ENCODE measurements at regions of chr18 and their contacts with region 1.

Region 1: DNA sequence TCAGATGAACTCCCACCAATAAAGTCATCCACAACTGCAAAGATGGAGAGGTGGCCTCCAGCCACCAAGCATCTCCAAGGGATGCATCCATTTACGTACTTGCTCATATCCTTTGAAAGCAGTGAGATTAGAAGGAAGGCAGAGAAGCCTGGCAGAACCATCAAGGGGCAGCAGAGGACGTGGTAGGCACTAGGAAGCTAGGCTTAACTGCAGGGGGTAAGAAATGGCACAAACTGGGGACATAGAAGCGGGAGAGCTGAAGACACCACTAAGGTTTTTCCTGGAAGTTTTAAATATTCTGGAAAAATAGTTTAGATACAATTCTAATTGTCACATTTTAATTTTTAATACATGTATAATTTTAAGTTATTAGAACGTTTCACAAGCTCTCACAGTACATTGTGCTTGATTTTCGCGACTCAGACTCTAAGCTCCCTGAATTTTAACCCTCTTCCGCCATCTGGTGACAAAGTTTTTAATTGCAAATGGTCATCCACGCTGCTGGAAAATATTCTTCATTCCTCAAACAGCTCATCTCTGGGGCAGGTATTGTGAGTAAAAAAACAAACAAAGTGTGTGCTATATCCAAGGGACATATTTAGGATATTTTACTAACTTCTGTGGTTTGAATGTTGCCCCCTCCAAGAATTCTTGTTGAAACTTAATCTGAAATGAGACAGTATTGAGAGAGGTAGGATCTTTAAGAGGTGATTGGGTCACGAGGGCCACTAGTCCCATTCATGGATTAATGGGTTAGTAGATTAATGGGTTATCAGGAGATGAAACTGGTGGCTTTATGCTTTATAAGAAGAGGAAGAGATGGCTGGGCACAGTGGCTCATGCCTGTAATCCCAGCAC is 1.6 kb upstream of the PSTPIP2 start:
- DNase-seq: peak; percentile 68
- ATAC-seq: peak; percentile 60
- H3K4me3 Mint-ChIP-seq: no peak overlapping the region
- H3K27ac Mint-ChIP-seq: no peak overlapping the region
- H3K4me1 Mint-ChIP-seq: peaks cover 36% of the 10 kb centered on the region
- H3K27me3 Mint-ChIP-seq: no peaks in the 10 kb centered on the region

Region 2: DNA sequence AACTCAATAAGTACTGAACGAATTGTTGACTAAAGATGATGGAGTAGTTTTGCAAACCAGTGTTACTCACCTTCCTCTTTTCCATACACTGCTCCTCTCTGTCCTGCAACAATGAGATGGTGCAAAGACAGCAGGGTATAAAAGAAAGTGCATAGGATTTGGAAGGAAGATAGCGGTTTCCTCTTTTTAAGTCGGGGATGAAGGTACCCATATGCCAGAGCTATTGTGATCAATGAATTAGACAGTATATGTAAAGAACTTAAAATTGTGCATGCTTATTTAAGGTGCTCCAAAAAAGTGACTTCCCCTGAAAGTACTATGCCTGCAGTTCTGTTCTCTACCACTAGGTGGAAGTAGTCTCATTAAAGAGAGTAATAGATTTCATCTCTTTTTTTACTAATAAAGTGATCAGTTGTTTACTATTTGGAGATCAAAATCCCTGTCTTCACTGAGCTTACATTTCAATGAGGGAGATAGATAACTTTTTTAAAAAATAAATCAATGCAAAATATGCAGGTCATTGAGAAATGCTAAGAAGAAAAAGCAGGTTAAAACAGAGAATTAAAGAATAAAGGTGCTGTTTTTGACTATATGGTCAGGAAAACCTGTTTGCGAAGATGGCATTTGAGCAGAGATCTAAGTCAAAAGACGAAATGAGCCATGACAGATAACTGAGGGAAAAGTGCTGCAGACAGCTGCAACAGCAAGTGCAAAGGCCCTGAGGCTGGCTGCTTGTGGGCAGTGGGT is 798.2 kb before region 1 on chr18:
- CTCF ChIA-PET with region 1: no interaction called
- POLR2A ChIA-PET with region 1: no interaction called
- intact Hi-C with region 1: loop called in 1 of 2 experiments (anchors 10 kb)
- DNase-seq: no peak
- ATAC-seq: no peak
- H3K4me3 Mint-ChIP-seq: no peak overlapping the region
- H3K27ac Mint-ChIP-seq: no peak overlapping the region
- H3K4me1 Mint-ChIP-seq: no peaks in the 10 kb centered on the region
- H3K27me3 Mint-ChIP-seq: no peaks in the 10 kb centered on the region

Region 3: DNA sequence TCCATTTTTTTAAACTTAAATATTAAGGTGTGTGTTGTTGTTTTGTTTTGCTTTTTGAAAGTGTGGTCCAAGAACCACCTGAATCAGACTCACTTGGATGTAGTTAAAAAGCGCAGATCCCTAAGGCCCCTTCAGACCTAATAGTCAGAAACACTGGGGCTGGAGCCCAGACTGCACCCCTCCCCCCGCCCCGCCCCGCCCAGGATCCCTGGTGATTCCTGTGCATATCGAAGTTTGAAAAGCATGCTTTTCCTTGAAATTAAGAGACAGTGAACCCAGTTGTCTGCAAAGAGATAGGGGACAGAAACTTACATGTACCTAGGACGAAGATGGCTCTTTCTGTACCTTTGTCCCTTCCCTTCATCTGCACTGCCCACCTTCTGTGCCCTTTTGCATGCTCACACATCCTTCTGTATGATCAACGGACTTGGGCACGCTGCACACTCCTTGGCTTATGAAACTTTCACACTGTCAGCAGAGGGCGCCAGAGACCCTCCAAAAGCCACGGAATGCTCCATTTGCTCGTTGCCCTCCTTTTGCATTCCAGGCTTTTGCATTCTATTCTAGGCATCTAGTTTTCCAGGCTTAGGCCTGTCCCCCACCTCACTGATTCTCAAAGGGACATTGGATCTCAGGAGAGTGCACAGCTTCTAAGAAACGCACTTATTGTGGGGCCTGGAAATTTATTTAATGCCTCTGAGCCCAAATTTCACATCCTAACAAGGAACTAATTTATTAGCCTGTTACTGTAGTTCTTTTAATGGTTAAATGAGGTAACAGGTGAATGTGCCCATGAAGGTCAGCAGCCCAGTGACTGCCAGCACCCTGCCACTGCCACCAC is 382.5 kb before region 1 on chr18:
- CTCF ChIA-PET with region 1: interaction called, 7 read pairs
- POLR2A ChIA-PET with region 1: no interaction called
- intact Hi-C with region 1: loop called (anchors 1 to 2 kb)
- DNase-seq: peak; percentile 87
- ATAC-seq: peak; percentile 17
- H3K4me3 Mint-ChIP-seq: no peak overlapping the region
- H3K27ac Mint-ChIP-seq: no peak overlapping the region
- H3K4me1 Mint-ChIP-seq: peaks cover 42% of the 10 kb centered on the region
- H3K27me3 Mint-ChIP-seq: peaks cover 7% of the 10 kb centered on the region

Region 4: DNA sequence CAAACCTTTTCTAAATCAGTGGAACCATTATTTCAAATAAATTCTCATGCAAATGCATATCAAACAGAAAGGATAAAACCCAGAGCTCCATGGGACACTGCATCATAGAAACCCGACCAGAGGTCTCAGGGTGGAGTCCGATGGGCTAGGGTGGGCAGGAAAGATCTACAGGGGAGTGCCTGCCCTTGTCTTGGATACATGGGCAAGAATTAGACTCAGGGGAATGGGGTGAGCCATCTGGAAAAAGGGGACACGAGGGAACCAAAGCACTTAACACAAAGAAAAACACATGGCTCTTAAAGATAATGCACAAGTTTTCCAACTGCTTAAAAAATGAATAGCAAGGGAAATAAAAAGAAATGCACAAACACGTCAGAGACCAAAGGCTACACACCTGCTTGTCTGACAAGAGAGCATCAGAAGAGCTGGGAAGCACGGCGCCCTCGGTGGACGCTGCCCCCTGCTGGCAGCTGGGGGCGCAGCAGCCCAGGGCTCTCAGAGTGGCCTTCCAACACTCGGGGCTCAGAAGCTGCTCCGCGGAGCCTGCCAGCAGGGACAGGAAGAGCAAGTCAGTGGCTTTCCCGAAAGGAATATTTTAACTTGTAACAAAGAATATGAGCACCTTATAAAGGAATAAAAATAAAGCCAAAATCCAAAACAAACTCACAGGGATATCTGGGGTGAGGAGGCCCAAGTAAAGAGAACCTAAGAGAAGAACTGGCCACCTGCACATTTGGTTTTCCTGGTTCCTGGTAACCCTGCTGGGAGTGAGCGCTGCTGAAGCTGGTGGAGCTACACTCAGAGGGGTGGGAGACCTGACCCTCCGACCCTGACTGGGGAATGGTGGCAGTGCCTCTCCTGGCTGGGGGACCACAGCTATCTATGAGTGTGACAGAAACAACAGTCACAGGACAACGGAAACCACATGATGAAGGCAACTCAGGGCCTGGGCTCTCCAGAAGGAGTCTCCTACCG is 193.7 kb before region 1 on chr18:
- CTCF ChIA-PET with region 1: interaction called, 20 read pairs
- POLR2A ChIA-PET with region 1: no interaction called
- intact Hi-C with region 1: loop called in 1 of 2 experiments (anchors 2 kb)
- DNase-seq: peak; percentile 85
- ATAC-seq: peak; percentile 87
- H3K4me3 Mint-ChIP-seq: no peak overlapping the region
- H3K27ac Mint-ChIP-seq: no peak overlapping the region
- H3K4me1 Mint-ChIP-seq: peaks cover 10% of the 10 kb centered on the region
- H3K27me3 Mint-ChIP-seq: no peaks in the 10 kb centered on the region

Region 5: DNA sequence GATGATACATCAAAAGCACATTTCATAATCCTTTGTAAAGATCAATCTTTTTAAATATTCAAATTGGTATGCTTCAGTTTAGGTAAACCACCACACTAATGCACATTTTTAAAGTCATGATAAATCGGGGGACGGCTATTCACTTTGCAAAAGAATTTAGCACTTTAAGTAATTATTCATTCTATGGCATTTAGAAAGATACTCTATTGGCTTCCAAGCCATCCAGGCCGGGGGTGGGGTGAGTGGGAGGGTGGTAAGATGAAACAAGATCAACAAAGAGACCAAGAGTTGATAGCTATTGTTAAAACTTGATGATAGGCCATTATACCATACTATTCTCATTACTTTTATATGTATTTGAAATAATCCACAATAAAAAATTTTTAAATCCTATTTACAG is 147.6 kb before region 1 on chr18:
- CTCF ChIA-PET with region 1: interaction called, 11 read pairs
- POLR2A ChIA-PET with region 1: no interaction called
- intact Hi-C with region 1: loop called in 1 of 2 experiments (anchors 10 kb)
- DNase-seq: no peak
- ATAC-seq: no peak
- H3K4me3 Mint-ChIP-seq: no peak overlapping the region
- H3K27ac Mint-ChIP-seq: no peak overlapping the region
- H3K4me1 Mint-ChIP-seq: peaks cover 4% of the 10 kb centered on the region
- H3K27me3 Mint-ChIP-seq: no peaks in the 10 kb centered on the region

Region 6: DNA sequence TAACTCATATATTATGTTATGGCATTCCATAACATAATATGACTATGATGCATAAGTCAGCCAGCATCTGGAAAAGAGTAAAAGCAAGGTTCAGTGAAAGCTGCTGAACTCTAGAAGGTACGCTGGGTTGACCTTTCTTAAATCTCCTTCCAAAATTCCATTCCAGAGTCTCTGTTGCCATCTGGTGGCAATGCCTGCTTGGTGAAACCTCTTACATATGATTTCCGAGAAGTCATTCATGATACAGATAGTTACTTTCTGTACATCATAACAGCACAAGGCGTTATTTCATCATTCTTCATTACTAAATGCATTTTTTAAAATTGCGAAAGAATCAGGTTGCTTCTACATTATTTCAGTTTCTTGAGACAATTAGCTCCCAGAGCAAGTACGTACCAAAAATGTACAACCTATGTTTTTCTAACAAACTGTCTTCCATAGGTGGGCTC is 99.6 kb before region 1 on chr18:
- CTCF ChIA-PET with region 1: interaction called, 14 read pairs
- POLR2A ChIA-PET with region 1: no interaction called
- intact Hi-C with region 1: loop called (anchors 1 to 2 kb)
- DNase-seq: peak; percentile 83
- ATAC-seq: peak; percentile 90
- H3K4me3 Mint-ChIP-seq: no peak overlapping the region
- H3K27ac Mint-ChIP-seq: peak overlapping the region; percentile 89
- H3K4me1 Mint-ChIP-seq: peaks cover 11% of the 10 kb centered on the region
- H3K27me3 Mint-ChIP-seq: no peaks in the 10 kb centered on the region

Region 7: DNA sequence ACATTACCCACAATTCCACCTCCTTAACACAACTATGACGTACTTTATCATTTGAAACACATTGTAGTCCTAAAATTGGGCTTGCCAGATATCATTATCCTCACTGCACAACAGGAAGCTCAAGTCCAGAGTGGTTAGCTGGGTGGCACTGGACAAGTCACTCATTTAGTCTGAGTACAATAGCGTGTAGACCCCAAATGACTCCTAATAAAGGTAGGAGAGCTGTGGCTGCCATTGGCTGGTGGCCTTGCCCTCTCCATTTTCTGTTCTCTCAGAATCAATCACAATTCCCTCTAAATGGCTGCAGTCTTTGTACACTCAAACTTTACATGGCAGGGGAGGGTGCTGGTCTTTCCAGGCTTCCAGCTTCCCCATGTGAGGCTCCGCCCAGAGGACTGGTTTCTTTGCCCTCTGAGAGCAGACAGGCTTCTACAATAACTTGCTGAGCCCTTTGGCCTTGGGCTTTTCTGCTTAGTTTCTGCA is 13.3 kb before region 1 on chr18:
- CTCF ChIA-PET with region 1: interaction called, 13 read pairs
- POLR2A ChIA-PET with region 1: interaction called, 3 read pairs
- intact Hi-C with region 1: no loop called
- DNase-seq: no peak
- ATAC-seq: no peak
- H3K4me3 Mint-ChIP-seq: no peak overlapping the region
- H3K27ac Mint-ChIP-seq: no peak overlapping the region
- H3K4me1 Mint-ChIP-seq: peaks cover 15% of the 10 kb centered on the region
- H3K27me3 Mint-ChIP-seq: no peaks in the 10 kb centered on the region

Region 8: DNA sequence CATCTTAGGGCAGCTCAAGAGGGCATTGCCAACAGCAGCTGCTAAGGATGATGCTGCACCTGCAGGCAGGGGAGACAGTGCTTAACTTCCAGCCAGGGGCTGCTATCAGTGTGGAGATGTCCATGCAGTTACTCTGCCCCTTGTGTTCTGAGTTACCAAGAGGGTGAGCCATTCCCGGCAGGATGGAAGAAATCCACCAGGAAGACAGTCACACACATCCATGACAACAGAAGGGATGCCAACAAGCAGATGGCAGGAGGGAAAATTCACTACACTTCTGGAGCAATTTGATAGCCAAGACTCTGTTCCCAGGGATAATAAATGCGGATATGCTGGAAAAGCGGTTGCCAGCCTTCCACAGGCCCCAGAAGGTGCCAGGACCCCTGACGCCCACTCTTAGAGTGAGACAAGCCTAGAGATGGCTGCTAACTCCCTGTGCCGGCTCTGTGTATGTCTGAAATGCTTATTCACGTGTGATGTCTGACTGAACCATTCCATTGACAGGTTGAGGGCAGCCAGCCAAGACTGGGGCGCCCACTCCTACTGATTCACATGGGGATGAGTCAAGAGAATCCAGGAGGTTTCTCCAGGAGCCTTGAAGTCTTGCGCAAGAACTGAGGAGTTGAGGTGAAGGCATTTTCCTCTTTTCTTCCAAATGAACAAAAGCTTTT is 558.8 kb after region 1 on chr18:
- CTCF ChIA-PET with region 1: no interaction called
- POLR2A ChIA-PET with region 1: no interaction called
- intact Hi-C with region 1: no loop called
- DNase-seq: no peak
- ATAC-seq: no peak
- H3K4me3 Mint-ChIP-seq: no peak overlapping the region
- H3K27ac Mint-ChIP-seq: no peak overlapping the region
- H3K4me1 Mint-ChIP-seq: no peaks in the 10 kb centered on the region
- H3K27me3 Mint-ChIP-seq: no peaks in the 10 kb centered on the region

Region 9: GRCh38 chr18:47166294-47166693 is 1092.6 kb after region 1 on chr18:
- CTCF ChIA-PET with region 1: no interaction called
- POLR2A ChIA-PET with region 1: no interaction called
- intact Hi-C with region 1: no loop called
- DNase-seq: no peak
- ATAC-seq: no peak
- H3K4me3 Mint-ChIP-seq: no peak overlapping the region
- H3K27ac Mint-ChIP-seq: no peak overlapping the region
- H3K4me1 Mint-ChIP-seq: peaks cover 42% of the 10 kb centered on the region
- H3K27me3 Mint-ChIP-seq: no peaks in the 10 kb centered on the region

Measured in activated CD4-positive, alpha-beta T cell treated with anti-CD3 and anti-CD28 coated beads for 36 hours (primary cell).